WTC11 (cell line): ENCODE measurements at regions of chr11 and their contacts with region 1.

Region 1: DNA sequence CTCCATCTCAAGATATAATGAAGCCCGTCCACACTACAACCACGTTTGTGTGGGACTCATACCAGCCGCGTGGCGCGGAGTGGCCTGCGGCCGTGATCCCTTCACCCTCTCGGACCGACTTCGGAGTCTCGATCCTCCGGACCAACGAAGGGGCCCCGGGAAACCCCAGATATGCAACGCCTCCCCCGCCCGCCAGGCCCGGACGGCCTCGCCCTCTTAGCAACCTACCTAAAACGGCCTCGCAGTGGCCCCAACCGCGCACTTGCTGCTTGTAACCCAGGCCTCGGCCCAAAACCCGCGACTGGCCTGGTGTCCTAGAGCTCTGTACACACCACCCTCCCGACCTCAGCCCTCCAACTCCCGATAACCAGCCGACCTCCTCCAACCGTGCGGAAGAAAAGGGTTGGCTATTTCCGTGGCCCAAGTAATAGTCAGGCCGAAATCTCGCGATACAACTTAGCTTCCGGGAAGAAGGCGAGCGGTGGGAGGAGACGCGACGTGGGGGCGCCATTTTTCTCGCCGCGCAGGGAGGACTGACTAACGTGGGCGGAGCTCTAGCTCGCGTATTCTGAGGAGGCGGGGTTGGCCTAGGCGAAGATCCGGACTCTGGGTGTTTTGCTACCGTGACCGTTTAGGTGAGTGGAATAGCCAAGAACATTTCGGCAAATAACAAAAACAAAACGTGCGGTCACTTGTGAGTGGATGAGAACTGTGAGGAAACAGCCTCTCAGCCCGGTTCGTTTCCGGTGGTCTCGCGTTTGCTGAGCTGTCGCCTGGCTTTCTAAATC is at the starts of genes C11orf54 and TAF1D:
- DNase-seq: peak; percentile 93
- ATAC-seq: peak; percentile 88
- H3K4me3 Mint-ChIP-seq: peak within 1 kb of the TSS; percentile 99
- H3K27ac Mint-ChIP-seq: peak within 1 kb of the TSS; percentile 99
- H3K4me1 Mint-ChIP-seq: peaks cover 56% of the 10 kb centered on the region
- H3K27me3 Mint-ChIP-seq: no peaks in the 10 kb centered on the region; the same call in 1 of the 2 replicates
- CTCF ChIP-seq: no peak
- total RNA-seq, gene C11orf54: 24.5 to 25.4 TPM (median 25.3 TPM) in 3 replicates
- total RNA-seq, gene TAF1D: 173 to 223 TPM (median 185 TPM) in 3 replicates

Region 2: GRCh38 chr11:93614173-93614722 is 127.0 kb before region 1 on chr11:
- CTCF ChIA-PET with region 1: no interaction called
- POLR2A ChIA-PET with region 1: no interaction called
- DNase-seq: peak; percentile 24
- ATAC-seq: peak; percentile 80
- H3K4me3 Mint-ChIP-seq: no peak overlapping the region
- H3K27ac Mint-ChIP-seq: no peak overlapping the region
- H3K4me1 Mint-ChIP-seq: no peaks in the 10 kb centered on the region
- H3K27me3 Mint-ChIP-seq: peaks cover 14% of the 10 kb centered on the region
- CTCF ChIP-seq: no peak; the same call in 1 of the 2 replicates

Region 3: DNA sequence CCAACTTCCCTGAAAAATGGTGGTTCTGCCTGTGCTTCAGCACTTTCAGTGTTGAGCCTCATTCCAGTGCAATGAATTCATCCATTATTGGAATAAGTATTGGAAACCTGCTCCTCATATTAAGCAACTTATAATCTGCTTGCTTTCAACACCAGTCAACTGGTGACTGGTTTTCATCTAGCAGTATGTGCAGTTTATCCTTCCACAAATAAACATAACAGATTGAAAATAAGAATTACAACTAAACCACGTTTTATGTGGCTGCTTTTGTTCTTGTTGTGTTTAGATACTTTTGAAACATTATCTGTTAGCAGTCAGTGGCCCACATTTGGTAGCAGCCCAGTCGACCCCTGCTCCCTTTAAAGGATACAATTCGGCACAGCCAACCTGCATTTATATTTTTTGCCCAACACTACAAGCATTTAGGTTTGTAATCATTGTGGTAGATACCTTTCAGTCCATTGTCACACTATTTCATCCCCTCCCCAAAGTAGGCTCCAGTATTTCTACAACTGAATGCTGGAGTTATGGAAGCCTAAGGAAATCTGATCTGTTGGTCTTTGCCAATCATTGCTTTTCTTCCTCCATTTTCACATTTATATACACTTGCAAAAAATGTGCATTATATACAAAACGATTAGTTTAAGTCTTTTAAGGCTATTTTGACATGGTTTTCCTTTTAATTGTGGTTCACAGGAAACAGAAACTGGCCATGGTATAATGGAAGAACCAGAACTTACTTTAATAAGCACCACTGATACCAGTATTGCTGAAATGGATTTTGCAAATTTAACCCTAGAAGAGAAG is 13.1 kb before region 1 on chr11:
- CTCF ChIA-PET with region 1: interaction called, 6 read pairs
- POLR2A ChIA-PET with region 1: interaction called, 15 read pairs
- DNase-seq: no peak
- ATAC-seq: peak; percentile 8
- H3K4me3 Mint-ChIP-seq: no peak overlapping the region
- H3K27ac Mint-ChIP-seq: peak overlapping the region; percentile 93
- H3K4me1 Mint-ChIP-seq: no peaks in the 10 kb centered on the region
- H3K27me3 Mint-ChIP-seq: no peaks in the 10 kb centered on the region
- CTCF ChIP-seq: no peak

Region 4: GRCh38 chr11:93784152-93784934 is 43.1 kb after region 1 on chr11 and contains the start of gene MED17:
- CTCF ChIA-PET with region 1: interaction called, 24 read pairs
- POLR2A ChIA-PET with region 1: interaction called, 57 read pairs
- DNase-seq: peak; percentile 91
- ATAC-seq: peak; percentile 97
- H3K4me3 Mint-ChIP-seq: peak within 1 kb of the TSS; percentile 94
- H3K27ac Mint-ChIP-seq: peak within 1 kb of the TSS; percentile 97
- H3K4me1 Mint-ChIP-seq: peaks cover 23% of the 10 kb centered on the region
- H3K27me3 Mint-ChIP-seq: no peaks in the 10 kb centered on the region
- CTCF ChIP-seq: no peak
- total RNA-seq, gene MED17: 25.3 to 30.5 TPM (median 29.6 TPM) in 3 replicates

Region 5: DNA sequence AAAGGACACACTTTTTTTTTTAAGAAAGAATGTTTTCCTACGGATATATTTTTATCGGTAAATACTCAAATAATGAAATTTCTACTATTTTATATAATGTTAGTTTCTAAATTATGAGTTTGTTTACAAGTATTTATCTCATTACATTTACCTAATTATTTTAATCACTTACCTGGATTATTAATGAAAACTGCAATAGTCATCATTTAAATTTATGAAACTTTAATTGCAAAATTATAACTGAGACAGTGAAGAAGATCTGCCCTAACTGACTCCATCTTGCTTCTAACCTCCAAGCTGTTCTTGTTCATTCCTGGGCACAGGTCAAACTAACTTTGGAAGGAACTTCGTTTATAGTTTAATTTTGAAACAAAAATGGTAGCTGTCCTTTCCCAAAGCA is 134.3 kb after region 1 on chr11:
- CTCF ChIA-PET with region 1: no interaction called
- POLR2A ChIA-PET with region 1: no interaction called
- DNase-seq: no peak
- ATAC-seq: no peak
- H3K4me3 Mint-ChIP-seq: no peak overlapping the region
- H3K27ac Mint-ChIP-seq: no peak overlapping the region
- H3K4me1 Mint-ChIP-seq: peaks cover 44% of the 10 kb centered on the region
- H3K27me3 Mint-ChIP-seq: no peaks in the 10 kb centered on the region; the same call in 1 of the 2 replicates
- CTCF ChIP-seq: no peak